ENCODE measurements at regions of chr7 and their contacts with region 1.

Region 1: GRCh38 chr7:143287935-143288826 is at the start of gene CASP2:
- DNase-seq: peak; percentile 98 to 99 (median 99)
- ATAC-seq: peak; percentile 97
- H3K4me3 ChIP-seq: peak within 1 kb of the TSS; percentile 92
- H3K4me3 Mint-ChIP-seq: peak within 1 kb of the TSS; percentile 88 to 99 (median 95)
- H3K27ac ChIP-seq: peak within 1 kb of the TSS; percentile 85
- H3K27ac Mint-ChIP-seq: peak within 1 kb of the TSS; percentile 86 to 95 (median 93)
- H3K4me1 ChIP-seq: peaks cover 13 to 35% of the 10 kb centered on the region in 2 donors
- H3K4me1 Mint-ChIP-seq: peaks cover 41 to 66% (median 59%) of the 10 kb centered on the region in 7 donors
- H3K27me3 ChIP-seq: no peaks in the 10 kb centered on the region
- H3K27me3 Mint-ChIP-seq: no peaks in the 10 kb centered on the region
- total RNA-seq, gene CASP2: 29.6 to 97.7 (median 69.1) TPM

Region 2: DNA sequence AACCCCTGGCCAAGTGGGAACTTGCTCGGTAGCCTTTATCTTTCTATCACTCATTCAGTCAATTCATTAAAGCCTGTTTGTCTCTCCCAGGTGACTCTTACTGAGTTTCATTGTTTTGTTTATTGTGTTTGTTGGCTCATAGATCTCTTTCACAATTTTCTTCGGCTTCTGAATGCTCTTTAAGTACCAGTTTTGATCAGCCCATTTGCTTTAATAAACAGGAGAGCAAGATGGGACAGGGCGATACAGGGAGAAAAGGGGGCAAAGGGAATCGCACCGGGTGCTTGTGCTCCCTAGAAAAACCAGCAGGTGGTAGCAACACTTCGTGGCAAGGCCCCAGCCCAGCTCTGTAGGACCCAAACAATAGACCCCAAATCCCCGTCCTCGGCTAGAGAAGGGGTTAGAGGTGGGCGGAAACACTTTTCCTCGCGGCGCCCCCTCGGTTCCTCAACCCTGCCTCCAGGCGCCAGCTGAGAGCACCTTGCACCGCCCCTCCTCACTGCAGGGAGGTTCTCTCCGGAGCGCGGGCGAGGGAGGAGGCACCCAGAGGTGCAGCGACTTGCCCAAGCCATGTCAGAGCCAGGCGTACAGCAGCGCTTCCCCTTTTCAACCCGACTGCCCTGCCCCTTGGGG is 434.3 kb before region 1 on chr7:
- CTCF ChIA-PET with region 1: no interaction called
- POLR2A ChIA-PET with region 1: no interaction called
- intact Hi-C with region 1: loop called in 1 of 2 experiments (anchors 5 kb)
- DNase-seq: peak; percentile 56 to 74 (median 68)
- ATAC-seq: peak; percentile 88
- H3K4me3 ChIP-seq: peak overlapping the region; percentile 85
- H3K4me3 Mint-ChIP-seq: peak overlapping the region; percentile 90 to 99 (median 97)
- H3K27ac ChIP-seq: peak overlapping the region; percentile 69
- H3K27ac Mint-ChIP-seq: peak overlapping the region; percentile 37 to 92 (median 89)
- H3K4me1 ChIP-seq: peaks cover 4 to 12% of the 10 kb centered on the region in 2 donors
- H3K4me1 Mint-ChIP-seq: peaks cover 17 to 61% (median 39%) of the 10 kb centered on the region in 7 donors
- H3K27me3 ChIP-seq: no peaks in the 10 kb centered on the region
- H3K27me3 Mint-ChIP-seq: peaks cover 0 to 30% (median 0%) of the 10 kb centered on the region in 5 donors

Region 3: GRCh38 chr7:143263266-143264195 is 24.6 kb before region 1 on chr7 and contains the start of gene GSTK1:
- CTCF ChIA-PET with region 1: interaction called, 6 read pairs
- POLR2A ChIA-PET with region 1: interaction called, 34 read pairs
- intact Hi-C with region 1: loop called (anchors 1 kb)
- DNase-seq: peak; percentile 62 to 86 (median 74)
- ATAC-seq: peak; percentile 97
- H3K4me3 ChIP-seq: peak within 1 kb of the TSS; percentile 90
- H3K4me3 Mint-ChIP-seq: peak within 1 kb of the TSS; percentile 93 to 99 (median 97)
- H3K27ac ChIP-seq: peak within 1 kb of the TSS; percentile 84
- H3K27ac Mint-ChIP-seq: peak within 1 kb of the TSS; percentile 76 to 99 (median 97)
- H3K4me1 ChIP-seq: peaks cover 34 to 40% of the 10 kb centered on the region in 2 donors
- H3K4me1 Mint-ChIP-seq: peaks cover 39 to 88% (median 66%) of the 10 kb centered on the region in 7 donors
- H3K27me3 ChIP-seq: no peaks in the 10 kb centered on the region
- H3K27me3 Mint-ChIP-seq: no peaks in the 10 kb centered on the region
- total RNA-seq, gene GSTK1: 253 to 385 (median 311) TPM

Region 4: GRCh38 chr7:143305423-143306070 is 17.4 kb after region 1 on chr7:
- CTCF ChIA-PET with region 1: interaction called, 3 read pairs
- POLR2A ChIA-PET with region 1: interaction called, 8 read pairs
- intact Hi-C with region 1: loop called (anchors 2 kb)
- DNase-seq: peak; percentile 32 to 62 (median 54)
- ATAC-seq: peak; percentile 87
- H3K4me3 ChIP-seq: no peak overlapping the region
- H3K4me3 Mint-ChIP-seq: peak overlapping the region in 1 of 10 donors; percentile 22
- H3K27ac ChIP-seq: no peak overlapping the region
- H3K27ac Mint-ChIP-seq: peak overlapping the region; percentile 4 to 85 (median 30)
- H3K4me1 ChIP-seq: peaks cover 0 to 2% of the 10 kb centered on the region in 2 donors
- H3K4me1 Mint-ChIP-seq: peaks cover 20 to 72% (median 37%) of the 10 kb centered on the region in 7 donors
- H3K27me3 ChIP-seq: no peaks in the 10 kb centered on the region
- H3K27me3 Mint-ChIP-seq: no peaks in the 10 kb centered on the region

Region 5: GRCh38 chr7:143372070-143372469 is 83.9 kb after region 1 on chr7:
- CTCF ChIA-PET with region 1: no interaction called
- POLR2A ChIA-PET with region 1: interaction called, 13 read pairs
- intact Hi-C with region 1: no loop called
- DNase-seq: peak in 5 of 9 donors; percentile 38 to 64 (median 46)
- ATAC-seq: peak; percentile 76
- H3K4me3 ChIP-seq: no peak overlapping the region
- H3K4me3 Mint-ChIP-seq: peak overlapping the region in 9 of 10 donors; percentile 13 to 67 (median 45)
- H3K27ac ChIP-seq: no peak overlapping the region
- H3K27ac Mint-ChIP-seq: peak overlapping the region in 8 of 9 donors; percentile 3 to 90 (median 70)
- H3K4me1 ChIP-seq: peaks cover 36 to 40% of the 10 kb centered on the region in 2 donors
- H3K4me1 Mint-ChIP-seq: peaks cover 34 to 59% (median 55%) of the 10 kb centered on the region in 7 donors
- H3K27me3 ChIP-seq: no peaks in the 10 kb centered on the region
- H3K27me3 Mint-ChIP-seq: peaks cover 0 to 22% (median 0%) of the 10 kb centered on the region in 5 donors

Region 6: GRCh38 chr7:143408686-143409561 is 120.7 kb after region 1 on chr7 and contains the start of gene EPHA1:
- CTCF ChIA-PET with region 1: interaction called, 4 read pairs
- POLR2A ChIA-PET with region 1: interaction called, 5 read pairs
- intact Hi-C with region 1: loop called in 1 of 2 experiments (anchors 1 kb)
- DNase-seq: peak in 7 of 9 donors; percentile 52 to 67 (median 62)
- ATAC-seq: peak; percentile 83
- H3K4me3 ChIP-seq: peak within 1 kb of the TSS; percentile 59
- H3K4me3 Mint-ChIP-seq: peak within 1 kb of the TSS; percentile 77 to 98 (median 94)
- H3K27ac ChIP-seq: peak within 1 kb of the TSS; percentile 69
- H3K27ac Mint-ChIP-seq: peak within 1 kb of the TSS; percentile 61 to 97 (median 94)
- H3K4me1 ChIP-seq: peaks cover 31 to 44% of the 10 kb centered on the region in 2 donors
- H3K4me1 Mint-ChIP-seq: peaks cover 23 to 88% (median 87%) of the 10 kb centered on the region in 7 donors
- H3K27me3 ChIP-seq: no peaks in the 10 kb centered on the region
- H3K27me3 Mint-ChIP-seq: peaks cover 0 to 14% (median 0%) of the 10 kb centered on the region in 5 donors
- total RNA-seq, gene EPHA1: 4.1 to 63.1 (median 33.6) TPM

Measured in naive thymus-derived CD4-positive, alpha-beta T cell (primary cell).